ENCODE measurements at regions of chr7 and their contacts with region 1.

Region 1: GRCh38 chr7:105024743-105025142 is 10.7 kb downstream of the KMT2E start:
- DNase-seq: no peak
- ATAC-seq: no peak

Region 2: DNA sequence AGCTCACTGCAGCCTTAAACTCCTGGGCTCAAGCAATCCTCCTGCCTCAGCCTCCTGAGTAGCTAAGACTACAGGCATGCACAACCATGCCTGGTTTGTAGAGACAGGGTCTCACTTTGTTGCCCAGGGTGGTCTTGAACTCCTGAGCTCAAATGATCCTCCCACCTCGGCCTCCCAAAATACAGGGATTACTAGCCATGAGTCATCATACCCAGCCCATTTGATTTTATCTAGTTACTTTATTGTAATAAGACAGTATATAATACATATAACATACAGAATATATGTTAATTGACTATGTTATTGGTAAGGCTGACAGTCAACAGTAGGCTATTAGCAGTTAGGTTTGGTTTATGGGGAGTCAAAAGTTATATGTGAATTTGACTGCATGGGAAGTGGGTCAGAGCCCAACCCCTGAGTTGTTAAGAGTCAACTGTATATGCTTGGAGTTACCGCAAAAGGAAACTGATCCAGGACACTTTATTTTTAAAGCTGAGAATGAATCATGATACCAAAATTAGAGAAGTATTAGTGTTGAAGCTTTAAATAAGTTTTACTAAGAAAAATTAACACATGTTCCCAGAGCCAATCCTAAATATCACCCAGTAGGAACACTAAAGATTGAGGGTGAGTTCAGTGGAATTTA is 31.4 kb before region 1 on chr7:
- intact Hi-C with region 1: no loop called
- DNase-seq: no peak
- ATAC-seq: peak in 1 of 2 donors; percentile 21

Region 3: GRCh38 chr7:105055621-105056020 is 30.9 kb after region 1 on chr7:
- intact Hi-C with region 1: loop called in 1 of 2 experiments (anchors 5 kb)
- DNase-seq: no peak
- ATAC-seq: no peak

Region 4: GRCh38 chr7:105079348-105079747 is 54.6 kb after region 1 on chr7:
- intact Hi-C with region 1: loop called in 1 of 2 experiments (anchors 10 kb)
- DNase-seq: no peak
- ATAC-seq: peak in 1 of 2 donors; percentile 21